Endothelial cell of umbilical vein (primary cell): ENCODE measurements at regions of chr17 and their contacts with region 1.

Region 1: GRCh38 chr17:48215583-48216139 is 108.1 kb downstream of the SNX11 start:
- DNase-seq: peak; percentile 74
- H3K4me3 ChIP-seq: no peak overlapping the region
- H3K27ac ChIP-seq: no peak overlapping the region
- H3K4me1 ChIP-seq: peaks cover 3% of the 10 kb centered on the region
- H3K27me3 ChIP-seq: no peaks in the 10 kb centered on the region
- CTCF ChIP-seq: peak; percentile 71 to 90
- POLR2A ChIP-seq: no peak

Region 2: DNA sequence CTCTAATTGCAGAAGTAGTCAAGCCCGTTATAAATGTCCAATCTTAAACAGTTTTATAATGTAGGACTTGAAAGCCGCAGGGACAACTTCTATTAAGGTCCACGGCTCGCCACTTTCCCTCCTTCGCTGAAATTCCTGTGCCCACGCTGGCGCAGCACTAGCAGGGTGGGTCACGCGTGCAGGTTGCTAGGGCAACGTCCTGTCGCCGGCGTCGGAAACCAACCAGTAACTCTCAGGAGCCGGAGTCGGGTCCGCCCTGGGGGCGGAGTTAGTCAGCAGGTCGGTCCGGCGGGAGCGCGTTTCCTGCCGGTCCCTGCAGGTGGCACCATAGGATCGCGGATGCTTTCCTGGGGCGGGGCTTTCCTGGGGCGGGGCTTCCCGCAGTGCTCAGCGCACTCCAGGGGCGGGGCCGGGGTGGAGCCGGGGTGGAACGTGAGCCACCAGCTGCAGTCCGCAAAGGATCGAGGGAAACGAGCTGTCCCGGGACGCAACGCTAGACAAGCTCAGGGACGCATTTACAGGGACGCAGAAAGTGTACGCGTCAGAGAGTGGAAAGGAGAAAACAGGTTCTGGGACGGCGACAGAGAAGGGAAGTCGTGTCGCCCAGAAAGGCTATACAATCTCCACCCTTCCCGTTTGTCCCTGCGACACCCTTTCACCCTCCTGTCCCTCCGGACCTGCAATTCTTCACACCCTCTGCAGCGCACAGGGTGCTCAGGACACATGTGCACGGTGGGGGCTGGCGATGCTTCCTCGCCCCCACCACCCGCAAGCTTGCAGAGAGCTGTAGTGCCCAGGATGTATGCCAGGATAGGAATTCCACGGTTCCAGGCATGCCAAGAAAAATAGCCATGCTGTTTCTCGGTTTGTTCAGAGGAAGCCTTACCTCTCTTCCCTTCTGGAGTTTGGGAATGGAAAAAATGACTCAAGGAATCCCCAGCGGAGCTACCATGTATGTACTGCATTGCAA is 190.4 kb before region 1 on chr17:
- CTCF ChIA-PET with region 1: interaction called, 6 read pairs
- POLR2A ChIA-PET with region 1: no interaction called
- dilution Hi-C with region 1: no loop called
- intact Hi-C with region 1: loop called (anchors 5 kb)
- DNase-seq: peak; percentile 97
- H3K4me3 ChIP-seq: peak overlapping the region; percentile 5 to 55 (median 39)
- H3K27ac ChIP-seq: no peak overlapping the region
- H3K4me1 ChIP-seq: peaks cover 26% of the 10 kb centered on the region
- H3K27me3 ChIP-seq: no peaks in the 10 kb centered on the region
- CTCF ChIP-seq: peak; percentile 73 to 90
- POLR2A ChIP-seq: no peak

Region 3: DNA sequence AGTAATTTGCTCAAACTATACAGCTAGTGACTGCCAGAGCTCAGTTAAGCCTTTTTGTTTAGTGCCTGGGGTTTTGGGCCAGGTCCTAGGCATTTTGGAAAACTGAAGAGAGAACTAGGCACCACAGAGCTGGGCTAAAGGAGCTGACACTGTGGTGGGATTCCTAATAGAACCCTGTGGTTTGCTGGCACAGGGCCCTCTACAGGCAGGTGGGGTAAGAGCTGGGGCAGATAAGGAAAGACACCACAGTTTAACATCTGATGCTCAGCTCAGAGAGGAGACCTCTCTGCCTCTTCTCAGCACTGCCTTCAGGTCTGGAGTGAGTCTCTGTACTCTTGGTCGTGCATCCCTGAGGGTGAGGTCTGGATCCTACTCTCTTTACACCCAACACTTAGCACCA is 13.1 kb after region 1 on chr17:
- CTCF ChIA-PET with region 1: interaction called, 20 read pairs
- POLR2A ChIA-PET with region 1: no interaction called
- dilution Hi-C with region 1: no loop called
- intact Hi-C with region 1: no loop called
- DNase-seq: no peak
- H3K4me3 ChIP-seq: no peak overlapping the region
- H3K27ac ChIP-seq: no peak overlapping the region
- H3K4me1 ChIP-seq: peaks cover 9% of the 10 kb centered on the region
- H3K27me3 ChIP-seq: no peaks in the 10 kb centered on the region
- CTCF ChIP-seq: no peak
- POLR2A ChIP-seq: no peak

Region 4: GRCh38 chr17:48322060-48322459 is 106.4 kb after region 1 on chr17:
- CTCF ChIA-PET with region 1: interaction called, 19 read pairs
- POLR2A ChIA-PET with region 1: no interaction called
- dilution Hi-C with region 1: no loop called
- intact Hi-C with region 1: no loop called
- DNase-seq: no peak
- H3K4me3 ChIP-seq: no peak overlapping the region
- H3K27ac ChIP-seq: no peak overlapping the region
- H3K4me1 ChIP-seq: no peaks in the 10 kb centered on the region
- H3K27me3 ChIP-seq: no peaks in the 10 kb centered on the region
- CTCF ChIP-seq: peak in 1 of 2 donors; percentile 8
- POLR2A ChIP-seq: no peak

Region 5: GRCh38 chr17:48351831-48352332 is 136.2 kb after region 1 on chr17:
- CTCF ChIA-PET with region 1: interaction called, 18 read pairs
- POLR2A ChIA-PET with region 1: no interaction called
- dilution Hi-C with region 1: no loop called
- intact Hi-C with region 1: no loop called
- DNase-seq: peak; percentile 69
- H3K4me3 ChIP-seq: no peak overlapping the region
- H3K27ac ChIP-seq: no peak overlapping the region
- H3K4me1 ChIP-seq: no peaks in the 10 kb centered on the region
- H3K27me3 ChIP-seq: peaks cover 2 to 4% of the 10 kb centered on the region in 2 experiments
- CTCF ChIP-seq: peak; percentile 28 to 42
- POLR2A ChIP-seq: no peak

Region 6: DNA sequence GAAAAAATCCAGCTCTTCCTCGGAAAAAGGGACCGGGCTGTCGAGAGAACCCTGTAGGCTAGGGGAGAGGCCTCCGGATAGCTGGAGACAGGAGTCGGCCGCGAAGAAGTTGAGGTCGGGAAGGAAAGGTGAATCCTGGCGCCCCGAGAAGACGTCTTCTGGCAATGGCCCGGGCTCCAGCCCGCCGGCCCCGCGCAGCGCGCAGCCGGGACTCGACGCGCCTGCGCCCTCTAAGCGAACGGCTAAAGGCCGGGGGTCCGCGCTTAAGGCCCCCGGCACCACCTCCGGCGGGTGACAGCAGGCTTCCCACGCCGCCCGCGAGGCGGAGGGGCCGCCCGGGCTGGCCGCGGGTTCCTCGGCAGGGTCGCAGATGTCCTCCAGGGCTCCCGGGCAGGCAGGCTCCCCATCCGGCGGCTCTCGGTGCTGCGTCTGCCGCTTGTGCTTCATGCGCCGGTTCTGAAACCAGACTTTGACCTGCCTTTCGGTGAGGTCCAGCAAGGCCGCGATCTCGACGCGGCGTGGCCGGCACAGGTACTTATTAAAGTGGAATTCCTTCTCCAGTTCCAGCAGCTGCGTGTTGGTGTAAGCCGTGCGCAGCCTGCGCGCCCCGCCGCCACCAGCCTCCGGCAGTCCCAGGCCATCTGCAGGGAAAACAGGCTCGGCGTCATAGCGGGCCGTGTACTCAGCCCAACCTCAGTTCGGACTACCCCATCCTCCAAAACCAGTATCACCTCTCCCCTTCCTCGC is 327.6 kb after region 1 on chr17:
- CTCF ChIA-PET with region 1: interaction called, 6 read pairs
- POLR2A ChIA-PET with region 1: interaction called, 13 read pairs
- dilution Hi-C with region 1: no loop called
- intact Hi-C with region 1: no loop called
- DNase-seq: peak; percentile 61
- H3K4me3 ChIP-seq: peak overlapping the region; percentile 88 to 99 (median 97)
- H3K27ac ChIP-seq: peak overlapping the region; percentile 80
- H3K4me1 ChIP-seq: peaks cover 41% of the 10 kb centered on the region
- H3K27me3 ChIP-seq: no peaks in the 10 kb centered on the region
- CTCF ChIP-seq: peak in 1 of 2 donors; percentile 3
- POLR2A ChIP-seq: no peak

Region 7: GRCh38 chr17:48612854-48613691 is 397.4 kb after region 1 on chr17:
- CTCF ChIA-PET with region 1: interaction called, 30 read pairs
- POLR2A ChIA-PET with region 1: no interaction called
- dilution Hi-C with region 1: no loop called
- intact Hi-C with region 1: loop called (anchors 1 kb)
- DNase-seq: peak; percentile 67
- H3K4me3 ChIP-seq: peak overlapping the region; percentile 52 to 86 (median 80)
- H3K27ac ChIP-seq: peak overlapping the region; percentile 47
- H3K4me1 ChIP-seq: peaks cover 38% of the 10 kb centered on the region
- H3K27me3 ChIP-seq: peaks cover 28 to 35% of the 10 kb centered on the region in 2 experiments
- CTCF ChIP-seq: peak; percentile 4 to 47
- POLR2A ChIP-seq: no peak